Caco-2 (cell line): ENCODE measurements at regions of chr2 and their contacts with region 1.

Region 1: GRCh38 chr2:16394072-16394985 is 271.3 kb downstream of the CYRIA start:
- DNase-seq: peak; percentile 65 to 74
- H3K4me3 ChIP-seq: no peak overlapping the region
- H3K4me3 Mint-ChIP-seq: no peak overlapping the region
- H3K27ac Mint-ChIP-seq: no peak overlapping the region
- H3K4me1 ChIP-seq: peaks cover 60% of the 10 kb centered on the region
- H3K4me1 Mint-ChIP-seq: peaks cover 13% of the 10 kb centered on the region
- H3K27me3 ChIP-seq: no peaks in the 10 kb centered on the region
- H3K27me3 Mint-ChIP-seq: no peaks in the 10 kb centered on the region
- CTCF ChIP-seq: no peak

Region 2: GRCh38 chr2:15782009-15782751 is 612.1 kb before region 1 on chr2:
- CTCF ChIA-PET with region 1: no interaction called
- POLR2A ChIA-PET with region 1: no interaction called
- intact Hi-C with region 1: loop called (anchors 2 kb)
- DNase-seq: peak; percentile 92 to 95
- H3K4me3 ChIP-seq: no peak overlapping the region
- H3K4me3 Mint-ChIP-seq: peak overlapping the region; percentile 31
- H3K27ac Mint-ChIP-seq: peak overlapping the region; percentile 17
- H3K4me1 ChIP-seq: peaks cover 44% of the 10 kb centered on the region
- H3K4me1 Mint-ChIP-seq: peaks cover 45% of the 10 kb centered on the region
- H3K27me3 ChIP-seq: no peaks in the 10 kb centered on the region
- H3K27me3 Mint-ChIP-seq: no peaks in the 10 kb centered on the region
- CTCF ChIP-seq: no peak

Region 3: DNA sequence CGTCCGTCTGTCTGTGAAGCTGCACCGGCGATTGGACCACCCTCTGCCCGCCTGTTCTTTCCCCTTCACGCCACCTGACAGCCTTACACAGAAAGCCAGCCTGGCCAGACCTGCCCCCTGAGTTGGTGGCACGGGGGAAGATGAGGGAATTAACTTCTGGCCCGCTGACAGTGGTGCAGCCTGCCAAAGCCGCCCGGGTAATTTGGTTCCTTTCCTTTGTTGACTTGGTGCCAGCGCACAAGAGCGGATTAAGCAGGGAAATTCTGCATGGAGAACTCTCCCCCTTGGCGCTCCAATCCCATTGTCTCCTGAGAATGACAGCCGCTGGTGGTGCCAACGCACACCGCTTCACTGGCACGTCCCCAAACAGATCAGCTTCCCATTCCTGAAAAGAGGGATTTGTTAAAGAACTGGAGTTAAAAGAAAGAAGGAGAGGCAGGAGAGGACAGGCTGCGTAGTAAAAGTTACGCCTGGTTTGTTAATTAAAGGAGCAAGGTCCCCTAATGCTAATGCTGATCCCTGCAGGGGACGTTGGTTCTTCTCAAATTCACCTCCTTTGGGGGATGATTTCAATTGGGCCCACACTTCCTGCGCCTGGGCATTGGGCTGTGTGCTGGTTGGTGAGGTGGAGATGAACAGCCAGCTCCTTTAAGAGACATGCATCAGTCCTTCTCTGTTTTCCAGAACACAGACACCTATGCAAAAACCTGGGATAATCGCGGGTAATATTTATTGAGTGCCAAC is 167.2 kb before region 1 on chr2:
- CTCF ChIA-PET with region 1: no interaction called
- POLR2A ChIA-PET with region 1: no interaction called
- intact Hi-C with region 1: loop called (anchors 5 kb)
- DNase-seq: no peak
- H3K4me3 ChIP-seq: no peak overlapping the region
- H3K4me3 Mint-ChIP-seq: no peak overlapping the region
- H3K27ac Mint-ChIP-seq: no peak overlapping the region
- H3K4me1 ChIP-seq: peaks cover 16% of the 10 kb centered on the region; the same call in 1 of the 2 replicates
- H3K4me1 Mint-ChIP-seq: no peaks in the 10 kb centered on the region
- H3K27me3 ChIP-seq: no peaks in the 10 kb centered on the region
- H3K27me3 Mint-ChIP-seq: no peaks in the 10 kb centered on the region
- CTCF ChIP-seq: no peak

Region 4: DNA sequence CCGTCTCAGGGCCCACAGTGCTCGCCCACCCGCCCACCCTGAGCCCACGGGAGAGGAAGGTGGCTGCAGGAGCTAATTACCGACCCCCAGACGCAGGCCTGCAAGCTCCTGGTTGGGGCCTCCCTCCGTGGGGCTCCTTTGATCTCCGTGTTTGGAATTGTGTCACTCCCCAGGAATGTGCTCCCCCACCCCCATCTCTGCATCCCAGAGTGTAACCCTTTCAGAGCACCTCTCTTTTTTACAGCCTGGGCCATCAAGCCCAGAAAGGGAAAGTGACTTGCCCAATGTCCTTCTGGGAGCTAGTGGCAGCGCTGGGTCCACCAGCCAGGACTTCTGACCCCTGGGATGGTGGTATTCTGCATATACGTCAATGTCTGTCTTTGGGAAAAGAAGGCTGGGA is 63.8 kb before region 1 on chr2:
- CTCF ChIA-PET with region 1: interaction called, 3 read pairs
- POLR2A ChIA-PET with region 1: interaction called, 7 read pairs
- intact Hi-C with region 1: loop called (anchors 1 kb)
- DNase-seq: peak; percentile 93 to 96
- H3K4me3 ChIP-seq: no peak overlapping the region
- H3K4me3 Mint-ChIP-seq: peak overlapping the region; percentile 58
- H3K27ac Mint-ChIP-seq: peak overlapping the region; percentile 98
- H3K4me1 ChIP-seq: peaks cover 62% of the 10 kb centered on the region
- H3K4me1 Mint-ChIP-seq: peaks cover 76% of the 10 kb centered on the region
- H3K27me3 ChIP-seq: no peaks in the 10 kb centered on the region
- H3K27me3 Mint-ChIP-seq: no peaks in the 10 kb centered on the region
- CTCF ChIP-seq: no peak

Region 5: GRCh38 chr2:16454621-16455020 is 60.3 kb after region 1 on chr2:
- CTCF ChIA-PET with region 1: no interaction called
- POLR2A ChIA-PET with region 1: no interaction called
- intact Hi-C with region 1: loop called (anchors 1 kb)
- DNase-seq: peak; percentile 51 to 64
- H3K4me3 ChIP-seq: no peak overlapping the region
- H3K4me3 Mint-ChIP-seq: peak overlapping the region; percentile 0
- H3K27ac Mint-ChIP-seq: peak overlapping the region; percentile 46
- H3K4me1 ChIP-seq: peaks cover 12% of the 10 kb centered on the region
- H3K4me1 Mint-ChIP-seq: peaks cover 14% of the 10 kb centered on the region
- H3K27me3 ChIP-seq: no peaks in the 10 kb centered on the region
- H3K27me3 Mint-ChIP-seq: no peaks in the 10 kb centered on the region
- CTCF ChIP-seq: no peak

Region 6: DNA sequence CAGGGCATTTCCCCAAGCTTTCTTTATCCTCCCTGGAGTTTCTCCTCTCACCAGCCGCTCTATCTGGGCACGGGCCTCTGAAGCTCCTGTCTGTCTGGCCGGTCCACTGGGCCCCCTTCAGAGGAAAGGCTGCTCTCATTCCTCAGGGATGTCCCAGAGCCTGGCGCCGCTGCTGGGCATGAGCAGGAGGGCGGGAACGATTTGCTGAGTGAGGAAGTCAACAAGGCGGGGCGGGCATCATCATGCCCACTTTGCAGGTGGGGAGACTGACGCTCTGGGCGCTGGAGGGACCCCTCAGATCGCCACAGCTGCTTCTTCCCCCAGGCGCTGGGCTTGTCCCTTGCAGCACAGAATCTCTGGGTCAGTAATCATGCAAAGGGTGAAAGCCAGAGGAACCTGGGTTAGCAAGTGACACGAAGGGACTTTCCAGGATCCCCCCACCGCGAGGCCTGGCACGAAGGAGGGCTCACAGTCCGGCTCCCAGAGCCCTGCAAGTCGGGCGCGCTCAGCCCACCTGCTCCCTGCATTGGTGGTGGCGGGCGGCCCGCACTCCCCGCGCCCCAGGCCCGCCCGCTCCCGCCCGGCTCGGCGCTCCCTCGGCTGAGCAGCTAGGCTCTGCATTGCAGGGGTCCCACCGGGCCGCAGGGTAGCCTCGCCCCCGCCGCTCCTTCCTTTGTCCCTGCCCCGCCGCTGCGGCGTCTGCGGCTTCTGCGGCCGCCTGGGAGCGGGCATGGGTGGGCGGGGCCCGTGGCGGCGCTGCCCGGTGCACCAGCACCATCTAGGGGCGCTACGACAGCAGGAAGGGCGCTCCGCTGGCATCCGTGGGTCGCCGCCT is 113.5 kb after region 1 on chr2:
- CTCF ChIA-PET with region 1: no interaction called
- POLR2A ChIA-PET with region 1: no interaction called
- intact Hi-C with region 1: loop called (anchors 1 kb)
- DNase-seq: peak; percentile 66 to 82
- H3K4me3 ChIP-seq: peak overlapping the region; percentile 26
- H3K4me3 Mint-ChIP-seq: peak overlapping the region; percentile 61
- H3K27ac Mint-ChIP-seq: peak overlapping the region; percentile 37
- H3K4me1 ChIP-seq: peaks cover 36% of the 10 kb centered on the region
- H3K4me1 Mint-ChIP-seq: peaks cover 12% of the 10 kb centered on the region
- H3K27me3 ChIP-seq: no peaks in the 10 kb centered on the region
- H3K27me3 Mint-ChIP-seq: no peaks in the 10 kb centered on the region
- CTCF ChIP-seq: peak; percentile 83 to 91